MCF 10A (cell line): ENCODE measurements at regions of chr7 and their contacts with region 1.

Region 1: DNA sequence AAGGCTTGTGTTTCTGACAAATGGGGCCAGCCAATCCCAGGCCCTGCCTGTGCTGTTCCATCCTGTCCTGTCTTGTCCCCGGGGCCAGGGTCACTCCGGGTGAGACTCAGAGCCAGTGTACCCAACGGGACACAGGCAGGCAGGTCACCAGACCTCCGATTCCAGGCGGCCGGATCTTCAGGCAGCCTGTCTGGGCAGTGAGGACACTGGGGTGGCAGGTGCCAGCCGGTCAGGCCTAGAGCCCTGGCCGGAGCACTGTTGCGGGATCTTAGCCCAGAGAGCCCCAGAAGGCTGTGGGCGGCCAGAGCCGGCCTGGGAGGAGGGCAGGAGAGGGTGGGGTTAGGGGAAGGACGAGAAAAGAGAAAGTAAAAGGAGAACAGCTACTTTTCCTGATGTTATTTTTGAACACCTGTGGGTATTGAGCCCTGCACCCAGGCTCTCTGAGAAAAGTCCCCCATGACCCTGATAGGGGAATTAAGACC is 134.3 kb upstream of the TNRC18 start:
- DNase-seq: peak; percentile 67
- H3K4me3 Mint-ChIP-seq: peak overlapping the region; percentile 66
- H3K27ac Mint-ChIP-seq: peak overlapping the region; percentile 73
- H3K4me1 Mint-ChIP-seq: peaks cover 23% of the 10 kb centered on the region
- H3K27me3 Mint-ChIP-seq: no peaks in the 10 kb centered on the region
- CTCF ChIP-seq: no peak

Region 2: GRCh38 chr7:5694912-5695726 is 137.2 kb after region 1 on chr7:
- CTCF ChIA-PET with region 1: interaction called, 12 read pairs
- POLR2A ChIA-PET with region 1: interaction called, 4 read pairs
- intact Hi-C with region 1: no loop called
- DNase-seq: no peak
- H3K4me3 Mint-ChIP-seq: no peak overlapping the region
- H3K27ac Mint-ChIP-seq: no peak overlapping the region
- H3K4me1 Mint-ChIP-seq: peaks cover 47% of the 10 kb centered on the region
- H3K27me3 Mint-ChIP-seq: no peaks in the 10 kb centered on the region
- CTCF ChIP-seq: no peak

Region 3: DNA sequence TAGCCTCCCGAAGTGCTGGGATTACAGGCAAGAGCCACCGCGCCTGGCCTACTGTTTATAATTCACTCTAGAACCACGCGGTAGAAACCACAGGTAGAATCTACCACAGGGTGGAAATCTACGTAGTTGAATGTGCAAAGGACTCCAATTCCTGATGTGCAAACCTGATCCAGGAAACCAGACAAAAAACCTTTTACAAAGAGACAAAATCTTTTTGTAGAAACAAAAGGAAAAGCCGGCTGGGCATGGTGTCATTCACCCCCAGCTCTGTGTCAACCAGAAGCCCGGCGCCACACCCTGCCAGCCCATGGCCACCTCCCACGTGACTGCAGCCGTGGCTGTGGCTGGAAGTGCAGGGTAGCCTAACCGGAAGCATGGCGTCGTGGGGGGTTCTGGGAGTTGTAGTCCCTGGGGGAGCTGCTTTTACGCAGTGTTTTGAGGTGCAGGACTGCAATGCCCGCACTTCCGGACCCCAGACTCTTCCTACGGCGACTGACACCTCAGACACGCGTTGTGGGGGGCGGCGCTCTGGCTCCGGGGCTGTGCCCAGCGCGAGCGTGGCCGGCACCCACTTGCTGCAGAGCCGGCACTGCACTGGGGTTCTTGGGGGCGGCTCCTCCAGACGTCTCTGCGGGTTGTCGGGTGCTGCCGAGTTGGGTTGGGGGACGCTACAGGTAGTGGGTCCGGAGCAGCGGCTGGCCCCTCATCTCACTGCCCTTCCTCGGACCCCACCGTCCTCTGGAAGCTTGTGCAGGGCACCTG is 265.0 kb after region 1 on chr7:
- CTCF ChIA-PET with region 1: no interaction called
- POLR2A ChIA-PET with region 1: no interaction called
- intact Hi-C with region 1: no loop called
- DNase-seq: peak; percentile 93
- H3K4me3 Mint-ChIP-seq: peak overlapping the region; percentile 83
- H3K27ac Mint-ChIP-seq: peak overlapping the region; percentile 10
- H3K4me1 Mint-ChIP-seq: peaks cover 10% of the 10 kb centered on the region
- H3K27me3 Mint-ChIP-seq: no peaks in the 10 kb centered on the region
- CTCF ChIP-seq: no peak